ENCODE measurements at regions of chr3 and their contacts with region 1.

Region 1: GRCh38 chr3:100590114-100590839 is 19.1 kb upstream of the ADGRG7 start:
- DNase-seq: peak; percentile 72
- ATAC-seq: peak; percentile 87
- H3K4me3 Mint-ChIP-seq: no peak overlapping the region
- H3K27ac Mint-ChIP-seq: no peak overlapping the region
- H3K4me1 Mint-ChIP-seq: peaks cover 3% of the 10 kb centered on the region
- H3K27me3 Mint-ChIP-seq: no peaks in the 10 kb centered on the region

Region 2: DNA sequence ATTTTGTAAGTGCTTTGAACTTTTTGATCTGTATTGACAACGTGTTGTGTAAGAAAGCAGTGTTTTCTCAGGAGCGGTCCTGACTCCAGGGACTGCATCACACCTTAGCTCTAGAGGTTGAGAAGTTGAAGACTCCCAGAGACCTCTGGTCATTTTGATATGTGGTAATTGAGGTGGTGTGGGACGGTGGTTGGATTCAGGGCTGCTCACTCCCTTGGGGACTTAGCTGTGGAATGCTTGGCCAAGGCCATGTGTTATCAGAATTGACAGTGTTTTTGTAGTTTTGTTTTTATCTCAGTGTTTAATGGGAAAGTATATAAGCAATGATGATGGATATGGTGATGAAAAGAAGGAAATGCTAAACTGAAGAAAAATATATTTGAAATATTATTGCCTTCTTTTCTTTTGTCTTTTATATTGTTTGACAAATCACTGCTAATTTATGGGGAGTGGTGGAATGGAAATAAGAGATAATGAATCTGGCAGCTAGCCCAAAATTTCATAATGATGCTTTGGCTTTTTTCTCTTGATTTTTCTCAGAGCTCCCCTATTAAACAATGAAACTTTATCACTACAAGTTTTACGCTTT is 756.6 kb before region 1 on chr3:
- CTCF ChIA-PET with region 1: interaction called, 6 read pairs
- POLR2A ChIA-PET with region 1: no interaction called
- intact Hi-C with region 1: loop called in 1 of 2 experiments (anchors 2 kb)
- DNase-seq: no peak
- ATAC-seq: no peak
- H3K4me3 Mint-ChIP-seq: no peak overlapping the region
- H3K27ac Mint-ChIP-seq: no peak overlapping the region
- H3K4me1 Mint-ChIP-seq: peaks cover 8% of the 10 kb centered on the region
- H3K27me3 Mint-ChIP-seq: no peaks in the 10 kb centered on the region

Region 3: DNA sequence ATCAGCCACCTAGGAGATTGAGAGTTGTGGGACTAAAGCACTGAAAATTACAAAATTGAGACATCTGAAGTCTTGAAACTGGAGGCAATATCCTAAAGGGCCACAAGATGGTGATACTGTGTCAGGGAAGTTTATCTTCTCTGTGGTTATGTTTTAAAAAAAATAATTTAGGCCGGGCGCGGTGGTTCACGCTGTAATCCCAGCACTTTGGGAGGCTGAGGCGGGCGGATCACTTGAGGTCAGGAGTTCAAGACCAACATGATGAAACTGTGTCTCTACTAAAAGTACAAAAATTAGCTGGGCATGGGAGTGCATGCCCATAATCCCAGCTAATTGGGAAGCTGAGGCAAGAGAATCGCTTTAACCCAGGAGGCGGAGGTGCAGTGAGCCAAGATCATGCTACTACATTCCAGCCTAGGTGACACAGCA is 273.6 kb before region 1 on chr3:
- CTCF ChIA-PET with region 1: interaction called, 6 read pairs
- POLR2A ChIA-PET with region 1: no interaction called
- intact Hi-C with region 1: loop called (anchors 1 kb)
- DNase-seq: peak; percentile 42
- ATAC-seq: peak; percentile 75
- H3K4me3 Mint-ChIP-seq: no peak overlapping the region
- H3K27ac Mint-ChIP-seq: no peak overlapping the region
- H3K4me1 Mint-ChIP-seq: peaks cover 9% of the 10 kb centered on the region
- H3K27me3 Mint-ChIP-seq: no peaks in the 10 kb centered on the region

Region 4: GRCh38 chr3:100463002-100463401 is 127.3 kb before region 1 on chr3:
- CTCF ChIA-PET with region 1: interaction called, 73 read pairs
- POLR2A ChIA-PET with region 1: no interaction called
- intact Hi-C with region 1: loop called (anchors 1 kb)
- DNase-seq: peak; percentile 22
- ATAC-seq: peak; percentile 94
- H3K4me3 Mint-ChIP-seq: no peak overlapping the region
- H3K27ac Mint-ChIP-seq: no peak overlapping the region
- H3K4me1 Mint-ChIP-seq: no peaks in the 10 kb centered on the region
- H3K27me3 Mint-ChIP-seq: peaks cover 2% of the 10 kb centered on the region

Region 5: GRCh38 chr3:100603469-100603868 is 13.2 kb after region 1 on chr3:
- CTCF ChIA-PET with region 1: interaction called, 14 read pairs
- POLR2A ChIA-PET with region 1: no interaction called
- intact Hi-C with region 1: no loop called
- DNase-seq: no peak
- ATAC-seq: peak; percentile 62
- H3K4me3 Mint-ChIP-seq: peak overlapping the region; percentile 40
- H3K27ac Mint-ChIP-seq: no peak overlapping the region
- H3K4me1 Mint-ChIP-seq: peaks cover 18% of the 10 kb centered on the region
- H3K27me3 Mint-ChIP-seq: no peaks in the 10 kb centered on the region

Region 6: GRCh38 chr3:100708967-100709841 is 118.9 kb after region 1 on chr3 and contains the start of gene TFG:
- CTCF ChIA-PET with region 1: no interaction called
- POLR2A ChIA-PET with region 1: no interaction called
- intact Hi-C with region 1: no loop called
- DNase-seq: peak; percentile 98
- ATAC-seq: peak; percentile 91
- H3K4me3 Mint-ChIP-seq: peak within 1 kb of the TSS; percentile 79
- H3K27ac Mint-ChIP-seq: peak within 1 kb of the TSS; percentile 98
- H3K4me1 Mint-ChIP-seq: peaks cover 45% of the 10 kb centered on the region
- H3K27me3 Mint-ChIP-seq: no peaks in the 10 kb centered on the region
- total RNA-seq, gene TFG: 61.4 to 79.8 TPM